Mammary epithelial cell (primary cell): ENCODE measurements at regions of chr17 and their contacts with region 1.

Region 1: DNA sequence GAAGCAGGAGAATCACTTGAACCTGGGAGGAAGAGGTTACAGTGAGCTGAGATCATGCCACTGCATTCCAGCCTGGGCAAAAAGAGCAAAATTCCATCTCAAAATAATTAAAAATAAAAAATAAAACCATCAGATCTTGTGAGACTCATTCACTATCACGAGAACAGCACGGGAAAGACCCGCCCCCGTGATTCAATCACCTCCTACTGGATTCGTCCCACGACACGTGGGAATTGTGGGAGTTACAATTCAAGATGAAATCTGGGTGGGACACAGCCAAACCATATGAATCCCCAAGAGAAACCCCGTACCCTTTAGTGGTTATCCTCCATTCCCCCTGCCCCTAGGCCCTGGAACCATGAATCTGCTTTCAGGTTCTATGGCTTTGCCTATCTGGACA is 15.4 kb upstream of the MGAT5B start:
- DNase-seq: no peak
- H3K4me3 ChIP-seq: no peak overlapping the region
- H3K27ac ChIP-seq: no peak overlapping the region
- H3K4me1 ChIP-seq: no peaks in the 10 kb centered on the region
- H3K27me3 ChIP-seq: no peaks in the 10 kb centered on the region
- CTCF ChIP-seq: no peak

Region 2: DNA sequence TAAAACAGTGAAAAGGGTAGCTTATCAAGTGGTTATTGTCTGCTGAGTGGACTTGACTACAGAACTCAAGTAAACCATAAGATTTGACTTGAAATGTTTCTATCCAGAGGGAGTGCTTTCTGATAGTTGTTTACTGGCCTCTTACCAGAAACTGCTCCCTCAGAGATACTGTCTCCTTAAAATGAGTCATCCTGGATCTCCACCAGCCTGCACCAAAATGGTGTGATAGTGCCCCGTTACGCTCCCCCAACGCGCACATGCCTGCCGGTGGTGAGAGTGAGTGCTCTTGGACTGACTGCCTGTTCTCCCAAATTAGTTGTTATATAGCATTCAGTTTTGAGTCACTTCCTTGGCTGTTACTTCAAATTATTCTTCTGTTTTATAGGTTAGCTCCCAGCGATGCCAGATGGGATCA is 290.1 kb before region 1 on chr17:
- CTCF ChIA-PET with region 1: no interaction called
- dilution Hi-C with region 1: loop called (anchors 10 kb)
- in situ Hi-C with region 1: no loop called
- intact Hi-C with region 1: no loop called
- DNase-seq: peak; percentile 82
- H3K4me3 ChIP-seq: no peak overlapping the region
- H3K27ac ChIP-seq: peak overlapping the region; percentile 58
- H3K4me1 ChIP-seq: peaks cover 40% of the 10 kb centered on the region
- H3K27me3 ChIP-seq: no peaks in the 10 kb centered on the region
- CTCF ChIP-seq: no peak

Region 3: GRCh38 chr17:76909971-76910760 is 57.3 kb after region 1 on chr17:
- CTCF ChIA-PET with region 1: no interaction called
- dilution Hi-C with region 1: loop called (anchors 5 kb)
- in situ Hi-C with region 1: no loop called
- intact Hi-C with region 1: no loop called
- DNase-seq: peak; percentile 44
- H3K4me3 ChIP-seq: no peak overlapping the region
- H3K27ac ChIP-seq: no peak overlapping the region
- H3K4me1 ChIP-seq: no peaks in the 10 kb centered on the region
- H3K27me3 ChIP-seq: no peaks in the 10 kb centered on the region
- CTCF ChIP-seq: no peak